Activated T-helper 1 cell treated with anti-CD3 and anti-CD28 coated beads, Interleukin-12 subunit alpha, Interleukin-12 subunit beta, Interleukin-2, Interleukin-4 antibody, amounts not matched to agents 30 ng/mL and 10 ng/mL and 1 ng/mL, durations not matched to agents 14 hours and 24 hours and 36 hours (primary cell): ENCODE measurements at regions of chr16 and their contacts with region 1.

Region 1: DNA sequence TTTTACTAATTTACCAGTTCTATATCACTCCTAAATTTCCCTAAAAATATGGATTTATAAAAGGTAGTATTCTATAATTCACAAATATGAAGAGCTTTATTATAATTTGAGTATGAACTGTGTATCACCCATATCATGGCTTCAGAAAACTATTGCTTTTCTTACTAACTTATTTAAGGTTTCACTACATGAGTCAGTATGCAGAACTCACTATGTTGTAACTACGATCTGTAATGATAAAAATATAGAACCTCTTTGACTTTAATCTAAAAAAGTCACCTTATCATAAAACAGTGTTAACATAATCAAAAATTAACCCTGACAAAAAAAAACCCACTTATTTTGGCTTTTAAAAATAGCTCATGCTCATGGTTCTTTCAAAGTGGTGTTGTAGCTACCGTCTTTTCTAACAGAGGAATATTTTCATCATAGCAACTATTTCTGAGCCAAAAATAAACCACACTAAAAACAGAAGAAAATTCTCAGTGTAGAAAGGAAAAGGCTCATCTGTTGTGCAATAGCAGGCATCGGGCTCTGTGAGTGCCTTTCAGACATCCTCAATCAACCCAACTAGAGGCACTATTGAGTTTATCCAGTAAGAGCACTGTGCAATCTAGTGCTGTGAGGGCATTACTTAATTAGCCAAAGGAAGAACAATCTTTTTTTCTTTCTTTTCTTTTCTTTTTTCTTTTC is 42.1 kb downstream of the ITGAM start:
- DNase-seq: no peak
- H3K4me3 Mint-ChIP-seq: no peak overlapping the region
- H3K27ac Mint-ChIP-seq: no peak overlapping the region
- H3K4me1 Mint-ChIP-seq: peaks cover 14% of the 10 kb centered on the region
- H3K27me3 Mint-ChIP-seq: peaks cover 20% of the 10 kb centered on the region

Region 2: GRCh38 chr16:30984669-30985400 is 317.0 kb before region 1 on chr16 and contains the start of gene HSD3B7:
- intact Hi-C with region 1: loop called (anchors 1 kb)
- DNase-seq: peak; percentile 73
- H3K4me3 Mint-ChIP-seq: peak within 1 kb of the TSS; percentile 7
- H3K27ac Mint-ChIP-seq: no peak within 1 kb of the TSS
- H3K4me1 Mint-ChIP-seq: no peaks in the 10 kb centered on the region
- H3K27me3 Mint-ChIP-seq: no peaks in the 10 kb centered on the region
- total RNA-seq, gene HSD3B7: 2.1 and 3.3 TPM in 2 replicates

Region 3: GRCh38 chr16:31052124-31052523 is 249.7 kb before region 1 on chr16:
- intact Hi-C with region 1: no loop called
- DNase-seq: no peak
- H3K4me3 Mint-ChIP-seq: no peak overlapping the region
- H3K27ac Mint-ChIP-seq: no peak overlapping the region
- H3K4me1 Mint-ChIP-seq: peaks cover 10% of the 10 kb centered on the region
- H3K27me3 Mint-ChIP-seq: no peaks in the 10 kb centered on the region